ENCODE measurements at regions of chr1 and their contacts with region 1.

Region 1: GRCh38 chr1:212488397-212489283 is 55.9 kb downstream of the NENF start:
- DNase-seq: peak; percentile 93
- H3K4me3 Mint-ChIP-seq: no peak overlapping the region
- H3K27ac Mint-ChIP-seq: peak overlapping the region; percentile 97
- H3K4me1 Mint-ChIP-seq: peaks cover 41% of the 10 kb centered on the region
- H3K27me3 Mint-ChIP-seq: no peaks in the 10 kb centered on the region
- CTCF ChIP-seq: no peak

Region 2: DNA sequence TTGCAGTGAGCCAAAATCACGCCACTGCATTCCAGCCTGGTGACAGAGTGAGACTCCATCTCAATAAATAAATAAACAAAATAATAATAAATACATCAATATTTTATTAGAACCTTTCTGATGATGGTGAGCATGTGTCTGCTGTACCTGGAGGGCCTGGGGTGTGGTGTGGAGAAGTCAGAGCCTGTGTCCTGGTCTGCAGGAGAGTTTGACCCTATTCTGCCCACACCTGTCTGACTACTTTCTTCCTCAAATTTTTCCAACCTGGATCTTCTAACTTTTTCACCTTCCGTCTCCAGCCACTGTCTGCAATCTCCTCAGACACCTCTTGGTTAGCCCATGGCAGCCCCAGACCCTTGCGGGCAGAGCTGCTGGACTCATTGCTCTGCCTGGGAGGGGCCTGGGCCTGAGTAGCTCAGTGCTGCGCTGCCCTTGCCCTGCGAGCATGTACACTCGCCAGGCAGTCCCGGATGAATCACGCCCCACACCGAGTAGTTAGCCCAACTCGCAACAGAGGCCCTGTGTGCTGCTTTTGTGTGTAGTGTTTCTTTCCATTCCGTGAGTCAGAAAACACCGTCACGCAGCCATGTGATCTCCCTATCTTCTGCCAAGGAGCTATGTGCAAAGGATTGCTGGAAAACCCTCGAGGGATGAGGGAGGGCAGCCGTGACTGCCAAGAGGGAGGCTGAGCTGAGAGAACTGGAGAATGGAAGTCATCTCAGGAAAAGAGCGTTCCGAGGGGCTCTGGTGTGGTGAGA is 18.8 kb before region 1 on chr1:
- CTCF ChIA-PET with region 1: interaction called, 4 read pairs
- POLR2A ChIA-PET with region 1: interaction called, 20 read pairs
- intact Hi-C with region 1: no loop called
- DNase-seq: peak; percentile 96
- H3K4me3 Mint-ChIP-seq: peak overlapping the region; percentile 49
- H3K27ac Mint-ChIP-seq: peak overlapping the region; percentile 90
- H3K4me1 Mint-ChIP-seq: peaks cover 10% of the 10 kb centered on the region
- H3K27me3 Mint-ChIP-seq: no peaks in the 10 kb centered on the region
- CTCF ChIP-seq: no peak

Region 3: GRCh38 chr1:212545941-212546635 is 57.4 kb after region 1 on chr1:
- CTCF ChIA-PET with region 1: no interaction called
- POLR2A ChIA-PET with region 1: interaction called, 14 read pairs
- intact Hi-C with region 1: no loop called
- DNase-seq: peak; percentile 49
- H3K4me3 Mint-ChIP-seq: no peak overlapping the region
- H3K27ac Mint-ChIP-seq: peak overlapping the region; percentile 24
- H3K4me1 Mint-ChIP-seq: peaks cover 9% of the 10 kb centered on the region
- H3K27me3 Mint-ChIP-seq: no peaks in the 10 kb centered on the region
- CTCF ChIP-seq: no peak

Region 4: GRCh38 chr1:212558693-212559480 is 70.2 kb after region 1 on chr1:
- CTCF ChIA-PET with region 1: interaction called, 3 read pairs
- POLR2A ChIA-PET with region 1: interaction called, 11 read pairs
- intact Hi-C with region 1: loop called (anchors 2 kb)
- DNase-seq: peak; percentile 98
- H3K4me3 Mint-ChIP-seq: peak overlapping the region; percentile 70
- H3K27ac Mint-ChIP-seq: peak overlapping the region; percentile 99
- H3K4me1 Mint-ChIP-seq: peaks cover 16% of the 10 kb centered on the region
- H3K27me3 Mint-ChIP-seq: no peaks in the 10 kb centered on the region
- CTCF ChIP-seq: no peak

Region 5: GRCh38 chr1:212566522-212567479 is 78.2 kb after region 1 on chr1:
- CTCF ChIA-PET with region 1: no interaction called
- POLR2A ChIA-PET with region 1: interaction called, 18 read pairs
- intact Hi-C with region 1: loop called (anchors 2 kb)
- DNase-seq: peak; percentile 94
- H3K4me3 Mint-ChIP-seq: peak overlapping the region; percentile 72
- H3K27ac Mint-ChIP-seq: peak overlapping the region; percentile 78
- H3K4me1 Mint-ChIP-seq: peaks cover 17% of the 10 kb centered on the region
- H3K27me3 Mint-ChIP-seq: no peaks in the 10 kb centered on the region
- CTCF ChIP-seq: no peak

Region 6: GRCh38 chr1:212595787-212596714 is 107.4 kb after region 1 on chr1:
- CTCF ChIA-PET with region 1: interaction called, 6 read pairs
- POLR2A ChIA-PET with region 1: interaction called, 10 read pairs
- intact Hi-C with region 1: loop called (anchors 1 kb)
- DNase-seq: peak; percentile 97
- H3K4me3 Mint-ChIP-seq: peak overlapping the region; percentile 69
- H3K27ac Mint-ChIP-seq: peak overlapping the region; percentile 100
- H3K4me1 Mint-ChIP-seq: peaks cover 27% of the 10 kb centered on the region
- H3K27me3 Mint-ChIP-seq: peaks cover 30% of the 10 kb centered on the region
- CTCF ChIP-seq: peak; percentile 97